ENCODE measurements at regions of chr11 and their contacts with region 1.

Region 1: GRCh38 chr11:9688716-9689511 is 25.0 kb downstream of the SWAP70 start:
- DNase-seq: peak; percentile 87
- H3K4me3 ChIP-seq: peak overlapping the region; percentile 51
- H3K27ac ChIP-seq: peak overlapping the region; percentile 96
- H3K4me1 ChIP-seq: peaks cover 99% of the 10 kb centered on the region
- CTCF ChIP-seq: no peak

Region 2: DNA sequence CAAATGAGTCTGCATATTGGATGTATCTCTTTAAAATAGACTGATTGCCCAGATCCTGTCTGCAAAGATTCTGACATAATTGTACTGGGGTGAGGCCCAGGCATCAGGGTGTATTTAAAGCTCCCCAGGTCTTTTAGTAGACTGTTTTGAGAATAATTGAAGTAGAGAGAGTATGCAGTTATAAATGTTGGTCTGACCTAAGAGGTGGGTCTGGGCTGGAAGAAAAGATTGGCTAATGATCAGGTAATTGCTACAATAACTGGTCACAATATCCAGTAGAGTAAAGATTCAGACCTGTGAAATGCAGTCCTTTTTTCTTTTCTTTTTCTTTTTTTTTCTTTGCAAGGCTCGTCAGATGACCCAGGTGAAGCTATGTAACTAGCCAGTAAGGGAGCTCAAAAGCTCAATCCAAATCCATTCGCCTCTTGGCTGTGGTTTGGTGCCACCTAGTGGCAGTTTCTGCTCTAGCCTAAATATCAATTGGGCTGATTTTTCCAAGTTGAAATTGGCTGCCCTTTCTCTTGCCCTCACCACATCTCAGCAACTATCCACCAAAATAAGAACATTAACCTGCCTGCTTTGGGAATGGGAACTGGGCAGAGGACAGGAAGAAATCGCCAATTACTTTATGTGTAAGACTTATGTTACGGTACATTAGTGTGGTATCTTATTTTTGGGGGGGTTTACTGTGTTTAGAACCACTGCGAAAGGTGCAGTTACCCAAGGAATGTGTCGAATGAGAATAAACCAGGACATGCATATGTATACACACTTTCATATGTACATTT is 182.2 kb before region 1 on chr11:
- CTCF ChIA-PET with region 1: no interaction called
- POLR2A ChIA-PET with region 1: no interaction called
- intact Hi-C with region 1: no loop called
- DNase-seq: peak; percentile 85
- H3K4me3 ChIP-seq: no peak overlapping the region
- H3K27ac ChIP-seq: no peak overlapping the region
- H3K4me1 ChIP-seq: peaks cover 4% of the 10 kb centered on the region
- CTCF ChIP-seq: peak; percentile 99

Region 3: GRCh38 chr11:9594267-9595046 is 94.5 kb before region 1 on chr11:
- CTCF ChIA-PET with region 1: no interaction called
- POLR2A ChIA-PET with region 1: interaction called, 28 read pairs
- intact Hi-C with region 1: loop called (anchors 5 kb)
- DNase-seq: peak; percentile 46
- H3K4me3 ChIP-seq: peak overlapping the region; percentile 61
- H3K27ac ChIP-seq: peak overlapping the region; percentile 95
- H3K4me1 ChIP-seq: peaks cover 71% of the 10 kb centered on the region
- CTCF ChIP-seq: no peak

Region 4: GRCh38 chr11:9700105-9700801 is 11.3 kb after region 1 on chr11:
- CTCF ChIA-PET with region 1: no interaction called
- POLR2A ChIA-PET with region 1: interaction called, 175 read pairs
- intact Hi-C with region 1: no loop called
- DNase-seq: no peak
- H3K4me3 ChIP-seq: no peak overlapping the region
- H3K27ac ChIP-seq: peak overlapping the region; percentile 63
- H3K4me1 ChIP-seq: peaks cover 90% of the 10 kb centered on the region
- CTCF ChIP-seq: no peak

Region 5: GRCh38 chr11:9739123-9739894 is 50.4 kb after region 1 on chr11:
- CTCF ChIA-PET with region 1: interaction called, 3 read pairs
- POLR2A ChIA-PET with region 1: interaction called, 53 read pairs
- intact Hi-C with region 1: loop called (anchors 2 kb)
- DNase-seq: peak; percentile 81
- H3K4me3 ChIP-seq: peak overlapping the region; percentile 47
- H3K27ac ChIP-seq: peak overlapping the region; percentile 94
- H3K4me1 ChIP-seq: peaks cover 72% of the 10 kb centered on the region
- CTCF ChIP-seq: no peak